ENCODE measurements at regions of chr7 and their contacts with region 1.

Region 1: GRCh38 chr7:48088559-48089045 is 463 bp upstream of the UPP1 start:
- DNase-seq: peak; percentile 72
- ATAC-seq: peak; percentile 62
- H3K4me3 ChIP-seq: peak overlapping the region; percentile 69 to 77
- H3K27ac ChIP-seq: peak overlapping the region; percentile 94
- H3K4me1 ChIP-seq: peaks cover 68 to 87% of the 10 kb centered on the region in 2 experiments
- H3K27me3 ChIP-seq: no peaks in the 10 kb centered on the region
- CTCF ChIP-seq: no peak
- POLR2A ChIP-seq: peak; percentile 43
- RAD21 ChIP-seq: no peak

Region 2: GRCh38 chr7:47979145-47979831 is 109.3 kb before region 1 on chr7 and contains the start of gene HUS1:
- CTCF ChIA-PET with region 1: no interaction called
- POLR2A ChIA-PET with region 1: interaction called, 5 read pairs
- RAD21 ChIA-PET with region 1: no interaction called
- intact Hi-C with region 1: loop called (anchors 2 kb)
- DNase-seq: peak; percentile 78
- ATAC-seq: peak; percentile 98
- H3K4me3 ChIP-seq: peak within 1 kb of the TSS; percentile 86 to 96
- H3K27ac ChIP-seq: peak within 1 kb of the TSS; percentile 73
- H3K4me1 ChIP-seq: peaks cover 5 to 7% of the 10 kb centered on the region in 2 experiments; a peak in 2 of 4 replicates
- H3K27me3 ChIP-seq: no peaks in the 10 kb centered on the region
- CTCF ChIP-seq: no peak
- POLR2A ChIP-seq: peak; percentile 49
- RAD21 ChIP-seq: no peak
- total RNA-seq, gene HUS1: 30.0 TPM

Region 3: DNA sequence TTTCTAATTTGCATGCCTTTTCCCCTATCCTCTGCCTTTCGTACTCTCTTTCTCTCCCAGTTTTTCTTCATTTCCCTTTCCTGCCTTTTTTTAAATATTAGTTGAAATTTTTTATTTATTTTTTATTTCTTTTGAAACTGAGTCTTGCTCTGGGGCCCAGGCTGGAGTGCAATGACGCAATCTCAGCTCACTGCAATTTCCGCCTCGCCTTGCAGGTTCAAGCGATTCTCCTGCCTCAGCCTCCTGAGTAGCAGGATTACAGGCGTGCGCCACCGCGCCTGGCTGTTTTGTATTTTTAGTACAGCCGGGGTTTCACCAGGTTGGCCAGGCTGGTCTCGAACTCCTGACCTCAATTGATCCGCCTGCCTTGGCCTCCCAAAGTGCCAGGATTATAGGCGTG is 89.2 kb before region 1 on chr7:
- CTCF ChIA-PET with region 1: no interaction called
- POLR2A ChIA-PET with region 1: interaction called, 23 read pairs
- RAD21 ChIA-PET with region 1: no interaction called
- intact Hi-C with region 1: loop called (anchors 1 kb)
- DNase-seq: no peak
- ATAC-seq: no peak; the same call in 1 of the 2 replicates
- H3K4me3 ChIP-seq: peak overlapping the region; percentile 41 to 55
- H3K27ac ChIP-seq: peak overlapping the region; percentile 34; the same call in 1 of the 2 replicates
- H3K4me1 ChIP-seq: peaks cover 0 to 19% of the 10 kb centered on the region in 2 experiments; a peak in 3 of 4 replicates
- H3K27me3 ChIP-seq: no peaks in the 10 kb centered on the region
- CTCF ChIP-seq: no peak
- POLR2A ChIP-seq: no peak
- RAD21 ChIP-seq: no peak

Region 4: GRCh38 chr7:48004638-48005037 is 84.0 kb before region 1 on chr7:
- CTCF ChIA-PET with region 1: no interaction called
- POLR2A ChIA-PET with region 1: interaction called, 23 read pairs
- RAD21 ChIA-PET with region 1: no interaction called
- intact Hi-C with region 1: loop called (anchors 1 kb)
- DNase-seq: no peak
- ATAC-seq: no peak
- H3K4me3 ChIP-seq: no peak overlapping the region
- H3K27ac ChIP-seq: no peak overlapping the region
- H3K4me1 ChIP-seq: peaks cover 0 to 14% of the 10 kb centered on the region in 2 experiments; a peak in 3 of 4 replicates
- H3K27me3 ChIP-seq: no peaks in the 10 kb centered on the region
- CTCF ChIP-seq: no peak
- POLR2A ChIP-seq: no peak
- RAD21 ChIP-seq: no peak